ENCODE measurements at regions of chr14 and their contacts with region 1.

Region 1: GRCh38 chr14:75328558-75329155 is 50.0 kb downstream of the FOS start:
- DNase-seq: no peak
- H3K4me3 ChIP-seq: no peak overlapping the region
- H3K27ac ChIP-seq: no peak overlapping the region
- H3K4me1 ChIP-seq: peaks cover 0 to 46% (median 18%) of the 10 kb centered on the region in 4 experiments
- H3K27me3 ChIP-seq: no peaks in the 10 kb centered on the region

Region 2: GRCh38 chr14:75339059-75339458 is 10.4 kb after region 1 on chr14:
- CTCF ChIA-PET with region 1: interaction called, 10 read pairs
- POLR2A ChIA-PET with region 1: interaction called, 3 read pairs
- DNase-seq: no peak
- H3K4me3 ChIP-seq: no peak overlapping the region
- H3K27ac ChIP-seq: no peak overlapping the region
- H3K4me1 ChIP-seq: peaks cover 36 to 71% (median 41%) of the 10 kb centered on the region in 4 experiments
- H3K27me3 ChIP-seq: no peaks in the 10 kb centered on the region

Measured in common myeloid progenitor, CD34-positive (primary cell).